AG04449 (cell line): ENCODE measurements at regions of chr5 and their contacts with region 1.

Region 1: DNA sequence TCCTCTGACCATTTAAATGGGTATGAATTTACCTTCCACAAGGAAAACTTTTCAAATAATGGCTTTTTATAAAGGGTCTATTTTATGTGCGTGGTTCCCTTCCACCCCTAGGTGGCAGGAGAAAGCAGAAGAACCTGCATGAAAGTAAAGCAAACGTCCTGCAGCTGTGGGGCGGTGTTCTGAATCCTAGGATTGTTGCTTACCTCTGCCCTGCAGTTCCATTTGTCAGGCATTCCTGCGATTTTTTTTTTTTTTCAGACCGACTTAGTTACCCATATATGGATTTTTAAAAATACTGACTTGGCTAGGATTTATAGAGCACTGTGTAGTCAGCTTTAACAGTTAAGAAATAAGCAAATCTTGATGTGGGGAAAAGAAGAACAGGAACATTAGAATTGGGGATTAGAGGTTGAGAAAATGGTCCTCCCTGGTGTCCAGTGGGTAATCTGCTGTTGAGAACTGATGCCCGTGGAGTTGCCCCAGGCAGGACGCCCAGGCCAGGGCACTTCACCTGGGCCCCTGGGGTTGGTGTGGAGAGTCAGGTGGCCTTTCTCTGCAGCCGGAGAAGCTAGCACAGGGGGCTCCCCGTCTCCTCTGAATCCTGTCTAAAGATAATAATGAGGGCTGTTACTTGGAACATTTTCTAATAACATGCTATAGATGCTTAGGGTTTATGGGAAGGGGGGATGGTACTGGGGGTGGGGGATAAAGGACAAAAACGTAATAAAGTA is 30.4 kb upstream of the LTC4S start:
- DNase-seq: peak; percentile 51
- H3K4me3 ChIP-seq: no peak overlapping the region
- CTCF ChIP-seq: peak; percentile 71

Region 2: DNA sequence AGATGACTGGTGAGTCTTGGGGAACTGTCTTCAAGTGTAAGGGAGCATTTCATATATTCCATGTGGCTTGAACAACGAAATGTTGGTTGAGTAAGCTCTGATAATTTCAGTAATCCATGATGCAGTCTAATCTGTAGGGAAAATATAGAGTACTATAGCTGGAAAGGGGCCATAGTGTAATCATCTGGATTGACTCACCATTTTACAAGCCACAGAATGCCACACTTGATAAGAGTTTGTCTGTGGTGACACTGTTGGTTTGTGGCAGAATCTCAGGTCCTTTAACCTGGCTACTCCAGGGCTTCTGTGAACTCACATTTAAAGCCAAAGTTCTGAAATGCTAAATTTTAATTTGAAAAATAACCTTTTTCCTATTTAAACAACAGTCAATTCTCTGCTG is 47.1 kb before region 1 on chr5:
- CTCF ChIA-PET with region 1: interaction called, 10 read pairs
- POLR2A ChIA-PET with region 1: no interaction called
- DNase-seq: no peak
- H3K4me3 ChIP-seq: no peak overlapping the region
- CTCF ChIP-seq: no peak

Region 3: DNA sequence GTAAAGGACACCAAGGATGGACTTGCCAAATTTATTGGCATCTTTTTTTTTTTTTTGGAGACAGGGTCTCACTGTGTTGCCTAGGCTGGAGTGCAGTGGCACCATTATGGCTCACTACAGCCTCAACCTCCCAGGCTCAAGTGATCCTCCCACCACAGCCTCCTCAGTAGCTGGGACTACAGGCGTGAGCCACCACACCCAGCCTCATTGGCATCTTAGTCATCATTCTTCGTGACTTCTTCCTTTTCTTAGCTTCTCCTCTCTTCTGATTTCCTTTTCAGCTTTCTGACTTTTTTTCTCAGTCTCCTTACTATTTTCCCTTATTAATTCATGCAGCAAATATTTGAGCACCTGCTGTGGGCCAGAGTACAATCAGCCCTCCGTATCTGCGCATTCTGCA is 24.6 kb before region 1 on chr5:
- CTCF ChIA-PET with region 1: interaction called, 33 read pairs
- POLR2A ChIA-PET with region 1: interaction called, 3 read pairs
- DNase-seq: no peak
- H3K4me3 ChIP-seq: no peak overlapping the region
- CTCF ChIP-seq: no peak

Region 4: DNA sequence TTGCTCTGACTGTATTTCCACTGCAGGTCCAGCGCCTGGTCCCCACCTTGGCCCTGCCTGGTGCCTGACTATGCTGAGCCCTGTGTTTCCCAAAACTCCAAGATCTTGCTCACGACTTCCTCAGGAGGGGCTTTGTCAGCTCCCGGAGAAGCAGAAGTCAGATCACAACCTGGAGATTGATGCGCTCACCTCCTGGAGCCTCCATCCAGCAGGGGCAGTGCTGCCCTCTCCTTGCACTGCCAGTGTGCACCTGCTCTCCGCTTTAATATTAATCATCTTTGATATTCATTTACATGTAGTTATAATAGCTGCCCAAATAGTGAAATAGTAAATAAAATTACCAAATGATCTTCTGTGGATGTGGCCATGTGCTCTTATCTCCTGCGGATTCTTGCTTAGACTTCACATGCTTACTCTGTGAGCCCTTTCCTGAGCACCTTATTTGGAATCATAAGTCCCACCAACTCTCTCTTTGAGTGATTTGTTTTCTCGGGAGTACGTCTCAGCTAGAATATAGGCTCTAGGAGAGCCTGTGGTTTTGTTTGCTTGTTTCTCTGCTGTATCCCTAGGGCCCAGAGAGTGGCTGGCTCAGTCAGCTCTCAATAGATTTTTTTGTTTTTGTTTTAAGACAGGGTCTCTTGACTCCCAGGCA is 13.4 kb before region 1 on chr5:
- CTCF ChIA-PET with region 1: interaction called, 42 read pairs
- POLR2A ChIA-PET with region 1: no interaction called
- DNase-seq: no peak
- H3K4me3 ChIP-seq: no peak overlapping the region
- CTCF ChIP-seq: no peak

Region 5: DNA sequence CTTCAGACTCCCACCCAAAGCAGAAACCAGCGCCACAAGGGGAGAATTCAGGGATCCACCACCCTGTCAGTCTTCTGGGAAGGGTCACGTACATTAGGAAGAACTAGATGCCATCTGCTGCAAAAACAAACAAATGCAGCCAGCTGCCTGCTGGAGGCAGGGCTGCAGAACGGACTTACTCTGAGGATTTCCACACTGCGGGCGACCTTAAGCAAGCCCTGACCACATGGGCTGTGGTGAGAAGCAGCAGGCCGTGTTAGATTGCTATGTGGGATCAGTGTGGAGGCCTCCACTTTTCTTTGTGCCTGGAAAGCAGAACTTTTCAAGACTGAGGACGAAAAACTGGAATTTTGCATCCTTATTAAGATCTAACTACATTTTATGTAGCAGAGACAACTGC is 17.0 kb after region 1 on chr5:
- CTCF ChIA-PET with region 1: interaction called, 30 read pairs
- POLR2A ChIA-PET with region 1: interaction called, 4 read pairs
- DNase-seq: no peak
- H3K4me3 ChIP-seq: no peak overlapping the region
- CTCF ChIP-seq: no peak

Region 6: GRCh38 chr5:179795863-179796833 is 32.8 kb after region 1 on chr5:
- CTCF ChIA-PET with region 1: interaction called, 19 read pairs
- POLR2A ChIA-PET with region 1: no interaction called
- DNase-seq: no peak
- H3K4me3 ChIP-seq: peak overlapping the region; percentile 64
- CTCF ChIP-seq: peak; percentile 73

Region 7: DNA sequence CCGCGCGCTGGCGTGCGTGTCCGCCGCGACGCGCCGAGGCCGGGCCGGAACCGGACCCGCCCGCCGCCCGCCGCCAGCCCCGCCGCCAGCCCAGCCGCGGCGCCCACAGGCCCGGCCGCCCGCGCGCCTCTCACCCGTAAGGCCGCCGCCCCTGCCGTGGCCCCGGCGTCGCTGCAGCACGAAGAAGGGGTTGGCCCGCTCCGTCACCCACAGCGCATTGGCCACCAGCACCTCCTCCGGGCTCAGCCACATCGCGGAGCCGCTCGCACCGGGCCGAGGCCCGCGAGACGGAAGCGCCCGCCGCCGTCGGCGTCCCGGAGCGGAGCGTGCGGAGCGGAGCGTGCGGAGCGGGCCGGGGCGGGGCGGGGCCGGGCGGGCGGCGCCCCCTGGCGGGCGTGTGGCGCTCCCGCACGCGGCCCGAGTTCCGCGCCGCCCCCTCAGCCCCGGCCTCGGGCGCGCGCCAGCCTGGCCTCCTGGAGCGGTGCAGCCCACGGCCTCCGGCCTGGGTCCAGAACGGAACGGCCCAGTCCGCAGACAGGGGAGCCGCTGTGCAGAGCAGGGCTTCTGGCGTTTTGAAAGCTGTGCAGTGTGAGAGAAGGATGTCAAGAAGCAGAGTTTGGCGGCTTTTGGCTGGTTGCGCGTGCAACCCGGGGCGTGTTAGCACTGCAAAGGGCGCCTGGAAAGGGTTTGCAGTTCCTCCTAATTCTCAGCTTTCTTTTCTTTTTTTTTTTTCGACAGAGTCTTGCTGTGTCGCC is 144.4 kb after region 1 on chr5 and contains the start of gene TBC1D9B:
- CTCF ChIA-PET with region 1: interaction called, 10 read pairs
- POLR2A ChIA-PET with region 1: no interaction called
- DNase-seq: no peak
- H3K4me3 ChIP-seq: peak within 1 kb of the TSS; percentile 83
- CTCF ChIP-seq: peak; percentile 24

Region 8: DNA sequence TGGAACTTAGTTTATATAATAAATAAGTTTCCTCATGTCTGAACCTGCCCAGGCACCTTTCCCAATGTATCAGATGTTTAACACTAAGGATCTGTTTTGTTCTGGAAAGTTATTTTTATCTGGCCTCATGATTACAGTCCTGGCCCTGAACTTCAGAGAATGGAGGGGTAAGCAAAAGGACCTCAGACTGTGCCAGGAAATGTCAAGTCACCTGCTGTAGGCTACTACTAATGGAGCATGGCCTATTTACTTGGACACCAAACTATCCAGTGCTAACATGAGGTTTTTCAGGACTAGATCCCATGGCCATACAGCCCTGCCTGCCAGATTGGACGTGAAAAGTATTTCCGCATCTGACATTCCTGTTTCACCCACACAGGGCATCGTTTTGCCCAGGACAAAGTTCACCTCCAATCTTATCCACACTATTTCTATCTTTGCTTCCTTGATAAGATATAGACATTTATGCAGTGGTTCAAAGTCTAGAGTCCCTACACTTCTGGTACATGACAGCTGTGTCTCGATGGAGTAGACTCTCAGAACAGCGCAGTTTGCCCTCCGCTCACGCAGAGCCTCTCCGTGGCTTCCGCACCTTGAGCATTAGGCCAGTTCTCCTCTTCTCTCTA is 1135.4 kb after region 1 on chr5 and contains the start of gene BTNL8:
- CTCF ChIA-PET with region 1: no interaction called
- POLR2A ChIA-PET with region 1: no interaction called
- DNase-seq: no peak
- H3K4me3 ChIP-seq: no peak within 1 kb of the TSS
- CTCF ChIP-seq: no peak